ENCODE measurements at regions of chr2 and their contacts with region 1.

Region 1: DNA sequence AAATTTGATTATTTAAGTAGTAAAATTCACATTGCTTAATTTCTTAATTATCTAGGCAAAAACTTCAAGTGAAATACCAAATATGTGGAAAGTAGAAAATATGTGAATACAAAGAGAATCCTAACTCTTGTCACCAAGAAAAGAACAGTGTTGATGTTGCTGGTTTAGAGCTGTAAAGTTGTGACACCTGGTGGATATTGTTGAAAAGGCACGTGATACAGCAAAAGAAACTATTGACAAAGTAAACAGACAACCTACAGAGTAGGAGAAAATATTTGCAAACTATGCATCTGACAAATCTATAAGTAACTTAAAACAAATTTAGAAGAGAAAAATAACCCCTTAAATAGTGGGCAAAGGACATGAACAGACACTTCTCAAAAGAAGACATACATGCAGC is 25.6 kb upstream of the ZC3H15 start:
- DNase-seq: no peak
- H3K4me3 ChIP-seq: no peak overlapping the region
- H3K27ac ChIP-seq: no peak overlapping the region
- H3K4me1 ChIP-seq: peaks cover 15% of the 10 kb centered on the region
- H3K27me3 ChIP-seq: no peaks in the 10 kb centered on the region
- CTCF ChIP-seq: peak; percentile 50 to 65

Region 2: DNA sequence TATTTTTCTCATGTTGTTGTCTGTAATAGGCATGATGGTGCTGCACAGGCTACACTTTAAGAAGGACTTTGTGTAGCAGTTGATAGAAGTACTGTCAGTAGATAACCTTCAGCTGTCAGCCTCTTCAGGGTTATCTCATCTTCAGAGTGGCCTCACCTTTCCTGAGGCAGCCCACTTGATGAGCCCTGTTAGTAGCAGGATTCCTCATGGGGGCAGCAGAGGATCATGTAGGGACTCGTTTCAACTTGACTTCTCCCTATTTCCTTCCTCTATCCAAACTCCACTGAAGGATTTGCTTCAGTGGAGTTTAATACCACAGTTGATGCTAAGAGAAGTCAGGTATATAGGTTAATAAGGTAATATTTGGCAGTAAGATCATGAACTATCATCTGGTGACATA is 1252.2 kb before region 1 on chr2:
- CTCF ChIA-PET with region 1: no interaction called
- dilution Hi-C with region 1: no loop called
- in situ Hi-C with region 1: no loop called
- intact Hi-C with region 1: loop called (anchors 5 kb)
- DNase-seq: peak; percentile 38
- H3K4me3 ChIP-seq: no peak overlapping the region
- H3K27ac ChIP-seq: no peak overlapping the region
- H3K4me1 ChIP-seq: no peaks in the 10 kb centered on the region
- H3K27me3 ChIP-seq: peaks cover 2% of the 10 kb centered on the region
- CTCF ChIP-seq: peak; percentile 65 to 69

Region 3: GRCh38 chr2:185291035-185291647 is 1169.3 kb before region 1 on chr2:
- CTCF ChIA-PET with region 1: no interaction called
- dilution Hi-C with region 1: no loop called
- in situ Hi-C with region 1: loop called in 1 of 2 experiments (anchors 25 kb)
- intact Hi-C with region 1: loop called (anchors 5 kb)
- DNase-seq: peak; percentile 53
- H3K4me3 ChIP-seq: no peak overlapping the region
- H3K27ac ChIP-seq: no peak overlapping the region
- H3K4me1 ChIP-seq: no peaks in the 10 kb centered on the region
- H3K27me3 ChIP-seq: no peaks in the 10 kb centered on the region
- CTCF ChIP-seq: peak; percentile 74 to 90

Region 4: GRCh38 chr2:185608799-185609198 is 851.7 kb before region 1 on chr2:
- CTCF ChIA-PET with region 1: no interaction called
- dilution Hi-C with region 1: no loop called
- in situ Hi-C with region 1: no loop called
- intact Hi-C with region 1: loop called (anchors 10 kb)
- DNase-seq: no peak
- H3K4me3 ChIP-seq: no peak overlapping the region
- H3K27ac ChIP-seq: no peak overlapping the region
- H3K4me1 ChIP-seq: no peaks in the 10 kb centered on the region
- H3K27me3 ChIP-seq: no peaks in the 10 kb centered on the region
- CTCF ChIP-seq: peak; percentile 29 to 52

Region 5: DNA sequence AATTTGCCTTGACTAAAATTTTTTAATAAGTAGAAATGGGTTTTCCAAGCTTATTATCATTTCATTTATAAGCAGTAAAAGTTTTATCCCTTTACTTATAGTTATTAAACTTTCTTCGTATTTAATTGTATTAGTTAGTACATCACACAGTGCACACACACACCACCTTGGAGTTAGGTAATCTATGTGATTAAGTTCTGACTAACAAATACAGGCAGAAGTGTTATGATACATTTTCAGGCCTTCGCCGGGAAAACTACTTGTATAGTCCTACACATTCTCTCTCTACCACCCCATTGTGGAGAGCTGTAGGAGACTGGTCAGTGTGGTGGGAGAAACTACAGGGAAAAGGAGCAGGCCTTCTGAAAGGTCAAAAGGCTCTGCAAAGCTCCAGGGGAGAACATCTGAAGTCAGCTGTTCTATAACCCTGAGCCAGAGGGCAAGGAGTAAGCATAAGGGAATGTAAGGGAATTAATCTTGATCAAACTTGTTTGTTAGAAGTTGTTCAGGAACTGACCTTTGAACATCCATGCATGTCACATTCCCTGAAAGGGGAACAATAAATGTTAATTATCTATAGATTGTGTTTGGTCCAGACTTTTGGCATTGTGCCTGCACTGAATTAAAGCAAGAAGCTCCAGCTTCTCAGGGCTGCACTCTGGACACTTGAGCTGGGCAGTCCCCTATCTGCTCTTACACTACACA is 490.2 kb before region 1 on chr2:
- CTCF ChIA-PET with region 1: no interaction called
- dilution Hi-C with region 1: no loop called
- in situ Hi-C with region 1: loop called in 1 of 2 experiments (anchors 25 kb)
- intact Hi-C with region 1: no loop called
- DNase-seq: peak; percentile 66
- H3K4me3 ChIP-seq: no peak overlapping the region
- H3K27ac ChIP-seq: peak overlapping the region; percentile 28
- H3K4me1 ChIP-seq: peaks cover 8% of the 10 kb centered on the region
- H3K27me3 ChIP-seq: no peaks in the 10 kb centered on the region
- CTCF ChIP-seq: no peak

Region 6: DNA sequence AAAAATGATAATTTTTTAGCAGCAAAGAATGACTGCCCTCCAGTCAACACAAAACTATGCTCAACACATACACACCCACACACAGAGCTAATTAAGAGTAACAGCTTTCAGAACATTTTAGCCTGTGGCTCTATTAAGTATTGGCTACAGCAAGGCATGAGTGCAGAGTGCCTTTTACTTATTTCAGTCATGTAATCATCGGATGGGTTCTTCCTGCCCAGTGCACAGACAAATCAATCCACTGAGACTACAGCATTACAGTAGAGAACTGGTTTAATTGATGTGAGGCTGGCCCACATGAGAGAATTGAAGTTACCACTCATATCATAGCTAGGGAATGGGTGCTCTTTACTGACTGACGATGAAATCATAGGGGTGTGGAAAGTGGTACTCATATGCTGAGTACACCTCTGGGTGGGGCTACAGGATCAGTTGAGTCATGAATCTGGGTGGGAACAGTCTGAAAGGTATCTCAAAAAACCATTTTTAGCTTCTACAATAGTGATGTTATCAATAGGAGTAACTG is 480.9 kb before region 1 on chr2:
- CTCF ChIA-PET with region 1: no interaction called
- dilution Hi-C with region 1: no loop called
- in situ Hi-C with region 1: loop called in 1 of 2 experiments (anchors 25 kb)
- intact Hi-C with region 1: loop called (anchors 1 kb)
- DNase-seq: peak; percentile 95
- H3K4me3 ChIP-seq: no peak overlapping the region
- H3K27ac ChIP-seq: peak overlapping the region; percentile 92
- H3K4me1 ChIP-seq: peaks cover 20% of the 10 kb centered on the region
- H3K27me3 ChIP-seq: no peaks in the 10 kb centered on the region
- CTCF ChIP-seq: peak in 1 of 2 donors; percentile 16

Region 7: GRCh38 chr2:186256540-186256939 is 203.9 kb before region 1 on chr2:
- CTCF ChIA-PET with region 1: no interaction called
- dilution Hi-C with region 1: no loop called
- in situ Hi-C with region 1: no loop called
- intact Hi-C with region 1: loop called (anchors 2 kb)
- DNase-seq: peak; percentile 43
- H3K4me3 ChIP-seq: no peak overlapping the region
- H3K27ac ChIP-seq: no peak overlapping the region
- H3K4me1 ChIP-seq: no peaks in the 10 kb centered on the region
- H3K27me3 ChIP-seq: no peaks in the 10 kb centered on the region
- CTCF ChIP-seq: peak; percentile 41 to 63